Mammary epithelial cell (primary cell): ENCODE measurements at regions of chr11 and their contacts with region 1.

Region 1: GRCh38 chr11:122781378-122782195 is 56.7 kb upstream of the CRTAM start:
- DNase-seq: peak; percentile 73
- H3K4me3 ChIP-seq: no peak overlapping the region
- H3K27ac ChIP-seq: peak overlapping the region; percentile 11
- H3K4me1 ChIP-seq: peaks cover 25% of the 10 kb centered on the region
- H3K27me3 ChIP-seq: no peaks in the 10 kb centered on the region
- CTCF ChIP-seq: peak; percentile 92 to 95

Region 2: DNA sequence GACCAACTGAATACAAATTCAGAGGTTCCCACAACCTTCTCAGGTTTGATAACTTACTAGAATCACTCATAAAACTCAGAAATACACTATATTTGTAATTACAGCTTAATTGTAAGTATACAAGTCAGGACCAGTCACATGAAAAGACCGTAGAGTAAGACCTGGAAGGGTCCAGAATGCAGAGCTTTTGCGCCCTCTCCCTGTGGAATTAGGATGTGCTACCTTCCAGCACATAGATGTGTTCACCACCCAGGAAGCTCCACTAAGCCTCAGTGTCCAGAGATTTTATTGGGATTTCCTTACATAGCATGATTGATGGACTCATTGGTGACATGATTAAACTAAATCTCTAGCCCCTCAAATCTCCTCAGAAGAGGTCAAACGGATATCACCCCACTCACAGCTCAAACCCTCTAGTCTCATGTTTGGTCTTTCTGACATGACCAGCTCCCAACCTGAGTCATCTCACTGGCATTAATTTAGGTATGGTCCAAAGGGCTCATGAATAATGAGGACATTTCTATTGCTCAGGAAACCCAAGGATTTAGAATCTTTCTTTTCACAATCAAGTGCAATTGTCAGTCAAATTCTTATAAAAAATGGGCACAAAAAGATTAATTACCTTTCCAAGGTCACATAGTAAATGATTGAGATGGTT is 203.3 kb before region 1 on chr11:
- CTCF ChIA-PET with region 1: interaction called, 3 read pairs
- dilution Hi-C with region 1: no loop called
- in situ Hi-C with region 1: no loop called
- intact Hi-C with region 1: loop called (anchors 1 kb)
- DNase-seq: no peak
- H3K4me3 ChIP-seq: no peak overlapping the region
- H3K27ac ChIP-seq: no peak overlapping the region
- H3K4me1 ChIP-seq: peaks cover 10% of the 10 kb centered on the region
- H3K27me3 ChIP-seq: no peaks in the 10 kb centered on the region
- CTCF ChIP-seq: no peak

Region 3: DNA sequence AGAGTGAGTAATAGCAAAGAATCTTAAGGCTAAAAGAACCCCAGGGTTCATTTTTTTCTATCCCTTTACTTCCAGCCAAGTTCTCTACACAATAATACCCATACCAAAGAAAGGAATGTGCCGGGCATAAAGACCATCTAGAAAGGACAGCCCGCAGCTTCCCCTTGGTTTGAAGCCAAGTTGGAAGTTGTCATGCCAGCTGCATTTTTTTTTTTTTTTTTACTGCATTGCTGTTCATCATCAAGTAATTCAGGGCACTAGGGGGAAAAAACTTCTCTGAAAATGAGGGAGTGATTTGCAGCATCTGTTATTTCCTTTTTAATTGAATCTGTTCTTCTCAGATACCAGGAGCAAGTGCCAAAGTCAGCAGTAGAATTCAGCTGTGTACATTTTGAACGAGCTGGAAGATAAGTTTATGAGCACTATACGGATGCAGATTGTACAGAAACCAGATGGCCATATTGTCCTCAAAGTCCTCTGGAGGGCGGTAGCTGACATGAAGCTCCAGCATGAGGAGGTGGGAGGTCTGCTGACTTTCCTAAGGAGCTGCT is 69.7 kb before region 1 on chr11:
- CTCF ChIA-PET with region 1: no interaction called
- dilution Hi-C with region 1: no loop called
- in situ Hi-C with region 1: no loop called
- intact Hi-C with region 1: loop called (anchors 2 kb)
- DNase-seq: peak; percentile 53
- H3K4me3 ChIP-seq: no peak overlapping the region
- H3K27ac ChIP-seq: no peak overlapping the region
- H3K4me1 ChIP-seq: peaks cover 50% of the 10 kb centered on the region
- H3K27me3 ChIP-seq: no peaks in the 10 kb centered on the region
- CTCF ChIP-seq: no peak

Region 4: GRCh38 chr11:122733318-122733717 is 48.3 kb before region 1 on chr11:
- CTCF ChIA-PET with region 1: no interaction called
- dilution Hi-C with region 1: no loop called
- in situ Hi-C with region 1: no loop called
- intact Hi-C with region 1: no loop called
- DNase-seq: no peak
- H3K4me3 ChIP-seq: no peak overlapping the region
- H3K27ac ChIP-seq: no peak overlapping the region
- H3K4me1 ChIP-seq: peaks cover 16% of the 10 kb centered on the region
- H3K27me3 ChIP-seq: no peaks in the 10 kb centered on the region
- CTCF ChIP-seq: no peak

Region 5: GRCh38 chr11:122749005-122749687 is 32.4 kb before region 1 on chr11:
- CTCF ChIA-PET with region 1: no interaction called
- dilution Hi-C with region 1: no loop called
- in situ Hi-C with region 1: no loop called
- intact Hi-C with region 1: loop called (anchors 2 kb)
- DNase-seq: peak; percentile 90
- H3K4me3 ChIP-seq: no peak overlapping the region
- H3K27ac ChIP-seq: peak overlapping the region; percentile 66
- H3K4me1 ChIP-seq: peaks cover 14% of the 10 kb centered on the region
- H3K27me3 ChIP-seq: no peaks in the 10 kb centered on the region
- CTCF ChIP-seq: no peak

Region 6: DNA sequence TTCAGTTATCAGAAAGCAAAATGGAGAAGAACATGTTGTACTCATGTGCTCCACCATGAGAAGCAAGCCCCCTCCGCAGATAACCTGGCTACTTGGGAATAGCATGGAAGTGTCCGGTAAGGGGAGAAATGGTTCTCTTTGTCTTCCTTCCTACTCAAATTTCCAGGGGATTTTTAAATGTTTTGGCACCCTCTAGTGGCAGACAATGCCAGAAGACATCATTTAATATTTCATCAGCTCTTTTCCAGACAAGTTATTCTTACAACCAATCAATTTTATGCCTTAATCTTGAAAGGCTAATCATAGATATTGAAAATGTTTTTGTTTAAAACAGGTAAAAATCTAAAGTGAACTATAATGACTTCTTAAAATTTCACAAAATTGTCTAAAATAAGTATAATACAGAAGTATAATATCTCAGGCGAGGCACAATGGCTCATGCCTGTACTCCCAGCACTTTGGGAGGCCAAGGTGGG is 72.4 kb after region 1 on chr11:
- CTCF ChIA-PET with region 1: interaction called, 7 read pairs
- dilution Hi-C with region 1: no loop called
- in situ Hi-C with region 1: no loop called
- intact Hi-C with region 1: loop called (anchors 1 kb)
- DNase-seq: peak; percentile 72
- H3K4me3 ChIP-seq: no peak overlapping the region
- H3K27ac ChIP-seq: no peak overlapping the region
- H3K4me1 ChIP-seq: peaks cover 35% of the 10 kb centered on the region
- H3K27me3 ChIP-seq: no peaks in the 10 kb centered on the region
- CTCF ChIP-seq: peak; percentile 63 to 67